GM12878 (cell line): ENCODE measurements at regions of chr4 and their contacts with region 1.

Region 1: DNA sequence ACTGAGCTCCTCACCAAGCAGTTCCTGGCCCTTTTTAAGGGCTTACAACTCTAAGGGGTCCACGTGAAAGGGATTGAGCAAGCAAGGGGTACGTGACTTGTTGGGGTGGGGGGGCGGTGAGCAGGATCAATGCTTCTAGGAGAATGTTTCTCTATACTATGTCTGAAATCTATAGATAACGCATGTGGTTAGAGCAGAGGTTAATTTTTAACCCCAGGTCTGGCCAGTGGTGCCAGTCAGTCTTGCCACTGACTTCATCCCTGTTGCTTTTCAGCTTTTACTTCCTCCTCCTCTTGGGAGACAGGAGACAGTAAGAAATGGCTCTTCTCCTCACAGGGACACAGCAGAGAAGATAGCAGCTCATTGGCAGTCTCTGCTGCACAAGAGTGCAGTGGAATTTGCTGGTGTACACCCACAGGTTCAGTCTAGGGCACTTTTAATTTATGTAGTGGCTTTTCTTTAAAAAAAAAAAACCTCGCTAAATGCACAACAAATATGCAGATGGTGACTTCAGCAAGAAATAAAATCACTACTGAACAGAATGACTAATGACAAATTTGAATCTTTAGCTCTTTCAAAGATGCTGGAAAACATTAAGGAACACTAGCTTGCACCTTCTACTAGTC is 190.4 kb downstream of the CCNG2 start:
- DNase-seq: no peak
- ATAC-seq: peak; percentile 72
- H3K4me3 ChIP-seq: no peak overlapping the region
- H3K27ac ChIP-seq: no peak overlapping the region
- H3K4me1 ChIP-seq: no peaks in the 10 kb centered on the region
- H3K27me3 ChIP-seq: no peaks in the 10 kb centered on the region
- CTCF ChIP-seq: no peak
- EP300 ChIP-seq: no peak
- POLR2A ChIP-seq: no peak
- RAD21 ChIP-seq: no peak

Region 2: DNA sequence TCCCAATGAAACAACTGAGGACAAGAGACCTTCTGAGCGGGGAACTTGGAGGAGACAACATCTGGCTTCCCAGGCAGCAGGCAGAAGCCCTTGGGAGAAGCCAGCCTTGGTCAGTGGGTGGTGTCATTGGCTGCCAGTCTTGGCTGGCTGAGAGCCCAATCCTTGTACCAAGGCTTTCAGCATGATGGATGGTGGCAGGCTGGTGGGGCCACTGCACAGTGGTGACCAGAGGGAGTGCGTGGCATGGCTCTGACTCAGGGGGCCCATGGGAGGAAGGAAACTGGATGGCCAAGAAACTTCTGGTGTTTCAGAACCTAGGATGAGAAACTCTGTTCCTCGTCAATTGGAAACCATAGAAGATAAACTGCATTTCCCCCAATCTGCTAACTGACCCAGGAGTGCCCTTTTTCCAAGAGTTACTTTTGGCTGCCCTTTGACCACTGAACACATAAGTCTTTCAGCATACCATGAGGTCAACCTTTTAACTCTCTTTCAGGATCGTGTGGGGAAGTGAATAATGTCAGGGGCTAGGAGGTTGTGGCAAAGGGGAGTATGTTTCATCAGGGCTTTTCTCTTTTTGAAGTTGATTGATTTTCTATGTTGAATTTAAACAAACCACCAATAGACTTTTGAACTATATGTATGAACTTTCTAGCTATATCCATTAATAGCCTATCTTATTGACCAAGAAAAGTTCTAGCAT is 510.4 kb before region 1 on chr4:
- CTCF ChIA-PET with region 1: no interaction called
- POLR2A ChIA-PET with region 1: no interaction called
- RAD21 ChIA-PET with region 1: no interaction called
- SMC1A ChIA-PET with region 1: no interaction called
- in situ Hi-C with region 1: no loop called
- intact Hi-C with region 1: no loop called
- DNase-seq: no peak
- ATAC-seq: no peak
- H3K4me3 ChIP-seq: no peak overlapping the region
- H3K27ac ChIP-seq: no peak overlapping the region
- H3K4me1 ChIP-seq: no peaks in the 10 kb centered on the region
- H3K27me3 ChIP-seq: no peaks in the 10 kb centered on the region
- CTCF ChIP-seq: no peak
- EP300 ChIP-seq: no peak
- POLR2A ChIP-seq: no peak
- RAD21 ChIP-seq: no peak

Region 3: DNA sequence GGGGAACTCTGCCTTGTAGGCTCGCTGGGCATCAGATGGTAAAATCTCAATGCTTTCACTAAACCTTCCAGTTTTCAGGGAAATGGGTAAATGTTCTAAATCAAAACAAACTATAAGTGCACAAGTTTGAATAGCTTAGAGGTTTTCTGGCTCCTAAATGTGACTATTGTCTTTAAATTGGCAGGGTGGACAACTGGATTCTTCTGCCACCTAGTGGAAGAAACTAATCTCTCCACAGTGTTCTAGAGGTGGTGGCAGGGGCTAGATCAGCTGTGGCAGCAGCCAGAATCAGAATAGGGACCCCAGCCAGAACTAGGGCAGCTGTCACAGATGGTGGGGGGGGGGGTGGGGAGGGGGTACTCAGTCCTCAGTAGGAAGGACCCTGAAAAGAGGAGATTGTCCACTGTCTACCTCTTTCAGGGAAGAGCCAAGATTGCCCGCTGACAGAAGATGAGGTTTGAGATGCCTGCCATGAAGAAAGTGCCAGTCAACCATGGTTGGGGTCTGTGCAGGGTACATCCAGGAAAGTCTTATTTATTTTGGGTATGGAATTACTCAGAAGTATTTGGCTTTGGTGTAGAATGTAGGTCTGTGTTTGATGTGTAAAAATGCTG is 11.0 kb after region 1 on chr4:
- CTCF ChIA-PET with region 1: interaction called, 25 read pairs
- POLR2A ChIA-PET with region 1: no interaction called
- RAD21 ChIA-PET with region 1: interaction called, 6 read pairs
- SMC1A ChIA-PET with region 1: interaction called, 6 read pairs
- in situ Hi-C with region 1: no loop called
- intact Hi-C with region 1: no loop called
- DNase-seq: no peak
- ATAC-seq: peak; percentile 88
- H3K4me3 ChIP-seq: no peak overlapping the region
- H3K27ac ChIP-seq: no peak overlapping the region
- H3K4me1 ChIP-seq: no peaks in the 10 kb centered on the region; the same call in 1 of the 2 replicates
- H3K27me3 ChIP-seq: no peaks in the 10 kb centered on the region; a peak in 1 of 4 replicates
- CTCF ChIP-seq: peak; percentile 60 to 65 (median 60); a peak in 5 of 6 replicates
- EP300 ChIP-seq: no peak
- POLR2A ChIP-seq: no peak
- RAD21 ChIP-seq: peak; percentile 67